Adrenal gland (tissue), 19 donors: ENCODE measurements at regions of chr19 and their contacts with region 1.

Region 1: GRCh38 chr19:37329686-37330085 is 41.2 kb upstream of the ZNF527 start:
- DNase-seq: no peak
- H3K4me3 ChIP-seq: no peak overlapping the region
- H3K27ac ChIP-seq: no peak overlapping the region
- H3K4me1 ChIP-seq: peaks cover 0 to 5% of the 10 kb centered on the region in 2 donors
- H3K27me3 ChIP-seq: no peaks in the 10 kb centered on the region
- CTCF ChIP-seq: peak in 3 of 6 experiments; percentile 3 to 21 (median 17)
- POLR2A ChIP-seq: no peak

Region 2: GRCh38 chr19:37217855-37218591 is 111.7 kb before region 1 on chr19 and contains the start of gene ZNF383:
- intact Hi-C with region 1: loop called in 1 of 2 experiments (anchors 10 kb)
- DNase-seq: peak; percentile 82 to 92 (median 89)
- H3K4me3 ChIP-seq: peak within 1 kb of the TSS; percentile 19 to 100 (median 80)
- H3K27ac ChIP-seq: peak within 1 kb of the TSS; percentile 38 to 92 (median 87)
- H3K4me1 ChIP-seq: peaks cover 4 to 13% of the 10 kb centered on the region in 2 donors
- H3K27me3 ChIP-seq: no peaks in the 10 kb centered on the region
- CTCF ChIP-seq: no peak
- POLR2A ChIP-seq: peak; percentile 41 to 78
- total RNA-seq, gene ZNF383: 4.4 to 11.1 (median 9.4) TPM

Region 3: DNA sequence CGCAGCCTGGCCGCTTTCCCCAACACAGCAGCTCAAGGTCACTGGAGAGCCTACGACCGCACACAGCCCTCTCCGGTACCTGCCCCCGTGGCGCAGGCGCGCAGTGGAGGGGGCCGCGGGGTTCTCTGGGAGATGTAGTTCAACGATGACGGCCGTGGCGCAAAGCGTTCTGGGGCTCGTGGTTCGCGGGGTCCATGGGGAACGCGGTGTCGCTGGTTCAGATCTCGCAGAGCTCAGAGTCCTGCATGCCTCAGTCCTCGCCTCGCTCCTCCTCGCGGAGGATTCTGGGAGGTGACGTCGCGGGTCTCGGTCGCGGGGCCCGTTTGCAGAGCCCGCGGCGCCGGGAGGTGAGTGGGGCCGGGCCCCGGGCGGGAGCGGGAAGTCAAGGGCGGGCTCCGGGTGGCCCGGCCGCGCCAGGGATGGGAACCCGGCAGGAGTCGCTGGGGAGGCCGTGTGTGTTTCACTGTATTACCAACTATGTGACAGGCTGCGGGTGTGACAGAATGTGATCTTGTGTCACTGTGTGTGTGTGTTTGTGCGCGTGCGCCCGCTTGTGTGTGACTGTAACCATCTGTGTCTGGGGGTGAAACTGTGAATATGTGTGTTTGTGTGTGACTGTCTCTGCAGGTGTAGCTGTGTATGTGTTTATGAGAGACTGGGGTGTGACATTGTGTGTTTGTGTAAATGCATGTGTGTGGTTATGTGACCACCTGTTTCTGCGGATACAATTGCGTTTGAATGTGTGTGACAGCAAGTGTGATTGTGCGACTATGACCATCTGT is 41.4 kb after region 1 on chr19 and contains the start of gene ZNF527:
- intact Hi-C with region 1: loop called in 1 of 2 experiments (anchors 10 kb)
- DNase-seq: peak; percentile 98 to 99 (median 99)
- H3K4me3 ChIP-seq: peak within 1 kb of the TSS; percentile 26 to 64 (median 59)
- H3K27ac ChIP-seq: peak within 1 kb of the TSS; percentile 39 to 94 (median 83)
- H3K4me1 ChIP-seq: peaks cover 4 to 13% of the 10 kb centered on the region in 2 donors
- H3K27me3 ChIP-seq: no peaks in the 10 kb centered on the region
- CTCF ChIP-seq: peak in 2 of 6 experiments; percentile 30 to 32
- POLR2A ChIP-seq: peak; percentile 59 to 90
- total RNA-seq, gene ZNF527: 1.8 to 11.4 (median 7.4) TPM